ENCODE measurements at regions of chr1 and their contacts with region 1.

Region 1: DNA sequence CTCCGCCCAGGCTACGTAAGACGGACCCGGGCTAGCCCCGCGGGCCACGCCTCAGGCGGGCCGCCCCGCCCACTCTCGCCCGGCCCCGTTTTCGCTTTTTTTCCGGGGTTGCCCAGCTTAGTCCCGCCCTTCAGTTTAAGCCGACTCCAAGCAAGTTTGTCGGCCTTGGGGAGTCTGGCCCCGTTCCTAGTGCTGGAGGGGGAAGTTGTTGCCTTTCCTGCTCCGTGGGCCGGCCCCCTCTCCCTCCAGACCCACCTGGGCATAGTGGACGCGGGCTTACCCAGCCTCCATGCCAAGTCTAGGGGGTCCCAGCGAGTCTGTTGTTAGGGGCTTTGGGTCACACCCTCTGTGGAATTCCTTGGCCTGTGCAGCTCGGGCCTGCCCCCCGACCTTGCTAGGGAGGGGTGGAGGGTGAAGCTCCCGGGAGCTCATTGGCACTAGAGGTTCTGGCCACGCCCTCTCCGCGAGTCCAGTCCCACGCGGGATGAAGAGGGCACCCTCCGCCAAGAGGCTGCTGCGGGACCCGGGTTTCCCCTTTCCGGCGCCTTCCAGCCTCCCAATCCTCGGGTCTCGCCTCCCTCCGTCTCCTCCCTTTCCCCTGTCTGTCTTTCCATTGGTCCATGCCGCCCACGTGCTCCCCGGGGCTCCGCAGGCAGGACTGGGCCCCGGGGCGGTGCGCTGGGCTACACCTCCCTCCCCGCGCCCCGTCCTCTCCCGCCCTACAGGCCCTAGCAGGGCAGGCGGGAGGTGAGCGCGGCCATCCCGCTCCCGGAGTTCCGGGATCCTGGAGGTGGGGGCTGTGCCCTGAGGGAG is 3.3 kb downstream of the RUSC1 start:
- DNase-seq: peak; percentile 90
- H3K4me3 Mint-ChIP-seq: peak overlapping the region; percentile 86
- H3K27ac Mint-ChIP-seq: peak overlapping the region; percentile 75
- H3K4me1 Mint-ChIP-seq: peaks cover 40% of the 10 kb centered on the region
- H3K27me3 Mint-ChIP-seq: no peaks in the 10 kb centered on the region

Region 2: GRCh38 chr1:155084722-155085503 is 239.1 kb before region 1 on chr1:
- intact Hi-C with region 1: loop called (anchors 5 kb)
- DNase-seq: peak; percentile 89
- H3K4me3 Mint-ChIP-seq: peak overlapping the region; percentile 88
- H3K27ac Mint-ChIP-seq: peak overlapping the region; percentile 94
- H3K4me1 Mint-ChIP-seq: peaks cover 34% of the 10 kb centered on the region
- H3K27me3 Mint-ChIP-seq: peaks cover 31% of the 10 kb centered on the region

Region 3: DNA sequence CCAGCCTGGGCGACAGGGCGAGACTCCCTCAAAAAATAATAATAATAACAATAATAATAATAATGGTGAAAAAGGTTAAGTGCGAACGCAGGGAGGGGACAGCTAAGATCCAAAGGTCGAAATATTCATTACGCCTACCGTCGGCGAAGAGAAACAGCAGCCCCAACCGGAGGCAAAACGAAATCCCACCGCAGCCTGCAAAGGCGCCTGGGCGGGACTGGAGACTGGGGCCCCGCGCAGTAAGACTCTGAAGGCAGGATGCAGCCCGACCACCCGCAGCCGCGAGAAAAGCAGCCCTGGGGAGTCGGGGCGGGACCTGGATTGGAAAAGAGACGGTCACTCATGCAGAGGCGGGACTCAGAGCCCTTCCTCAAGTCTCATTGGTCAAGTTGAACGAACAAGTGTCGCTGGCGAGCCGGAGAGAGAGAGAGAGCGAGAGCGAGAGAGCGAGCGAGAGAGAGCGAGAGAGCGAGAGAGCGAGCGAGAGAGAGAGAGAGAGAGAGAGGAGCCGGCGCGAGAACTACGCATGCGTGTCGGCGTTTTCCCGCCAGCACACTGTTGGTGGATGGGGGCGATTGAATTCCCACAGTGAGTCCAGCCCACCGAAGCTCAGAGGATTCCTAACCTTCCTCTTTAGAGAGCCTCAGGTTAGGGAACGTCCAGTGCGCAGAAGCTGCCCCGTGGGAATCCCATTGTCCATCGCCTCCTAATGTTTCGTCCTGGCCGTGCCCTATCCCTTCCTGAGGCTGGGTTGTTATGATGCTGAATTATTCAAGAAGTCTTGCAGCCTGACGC is 79.4 kb before region 1 on chr1:
- intact Hi-C with region 1: loop called (anchors 1 kb)
- DNase-seq: peak; percentile 95
- H3K4me3 Mint-ChIP-seq: peak overlapping the region; percentile 86
- H3K27ac Mint-ChIP-seq: peak overlapping the region; percentile 100
- H3K4me1 Mint-ChIP-seq: peaks cover 50% of the 10 kb centered on the region
- H3K27me3 Mint-ChIP-seq: peaks cover 2% of the 10 kb centered on the region

Region 4: GRCh38 chr1:155277070-155277895 is 46.7 kb before region 1 on chr1 and contains the start of gene HCN3:
- intact Hi-C with region 1: loop called (anchors 1 kb)
- DNase-seq: peak; percentile 91
- H3K4me3 Mint-ChIP-seq: peak within 1 kb of the TSS; percentile 83
- H3K27ac Mint-ChIP-seq: peak within 1 kb of the TSS; percentile 62
- H3K4me1 Mint-ChIP-seq: peaks cover 38% of the 10 kb centered on the region
- H3K27me3 Mint-ChIP-seq: peaks cover 7% of the 10 kb centered on the region
- total RNA-seq, gene HCN3: 2.5 and 3.3 TPM in 2 replicates

Region 5: GRCh38 chr1:155591770-155592169 is 267.8 kb after region 1 on chr1:
- intact Hi-C with region 1: loop called (anchors 1 kb)
- DNase-seq: peak; percentile 25
- H3K4me3 Mint-ChIP-seq: no peak overlapping the region
- H3K27ac Mint-ChIP-seq: no peak overlapping the region
- H3K4me1 Mint-ChIP-seq: peaks cover 4% of the 10 kb centered on the region
- H3K27me3 Mint-ChIP-seq: no peaks in the 10 kb centered on the region

Region 6: DNA sequence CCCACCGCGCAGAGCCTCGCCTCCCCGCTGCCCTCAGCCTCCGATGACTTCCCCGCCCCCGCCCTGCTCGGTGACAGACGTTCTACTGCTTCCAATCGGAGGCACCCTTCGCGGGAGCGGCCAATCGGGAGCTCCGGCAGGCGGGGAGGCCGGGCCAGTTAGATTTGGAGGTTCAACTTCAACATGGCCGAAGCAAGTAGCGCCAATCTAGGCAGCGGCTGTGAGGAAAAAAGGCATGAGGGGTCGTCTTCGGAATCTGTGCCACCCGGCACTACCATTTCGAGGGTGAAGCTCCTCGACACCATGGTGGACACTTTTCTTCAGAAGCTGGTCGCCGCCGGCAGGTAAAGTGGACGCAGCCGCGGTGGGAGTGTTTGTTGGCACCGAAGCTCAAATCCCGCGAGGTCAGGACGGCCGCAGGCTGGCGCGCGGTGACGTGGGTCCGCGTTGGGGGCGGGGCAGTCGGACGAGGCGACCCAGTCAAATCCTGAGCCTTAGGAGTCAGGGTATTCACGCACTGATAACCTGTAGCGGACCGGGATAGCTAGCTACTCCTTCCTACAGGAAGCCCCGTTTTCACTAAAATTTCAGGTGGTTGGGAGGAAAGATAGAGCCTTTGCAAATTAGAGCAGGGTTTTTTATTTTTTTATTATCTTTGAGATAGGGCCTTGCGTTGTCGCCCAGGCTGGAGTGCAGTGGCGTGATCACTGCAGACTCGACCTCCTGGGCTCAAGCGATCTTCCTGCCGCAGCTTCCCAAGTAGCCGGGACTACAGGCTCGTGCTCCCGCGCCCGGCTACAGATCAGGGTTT is 889.0 kb after region 1 on chr1 and contains the start of gene PMF1:
- intact Hi-C with region 1: loop called (anchors 10 kb)
- DNase-seq: peak; percentile 93
- H3K4me3 Mint-ChIP-seq: peak within 1 kb of the TSS; percentile 92
- H3K27ac Mint-ChIP-seq: peak within 1 kb of the TSS; percentile 97
- H3K4me1 Mint-ChIP-seq: peaks cover 53% of the 10 kb centered on the region
- H3K27me3 Mint-ChIP-seq: no peaks in the 10 kb centered on the region
- total RNA-seq, gene PMF1: 105 and 111 TPM in 2 replicates